ENCODE measurements at regions of chr12 and their contacts with region 1.

Region 1: DNA sequence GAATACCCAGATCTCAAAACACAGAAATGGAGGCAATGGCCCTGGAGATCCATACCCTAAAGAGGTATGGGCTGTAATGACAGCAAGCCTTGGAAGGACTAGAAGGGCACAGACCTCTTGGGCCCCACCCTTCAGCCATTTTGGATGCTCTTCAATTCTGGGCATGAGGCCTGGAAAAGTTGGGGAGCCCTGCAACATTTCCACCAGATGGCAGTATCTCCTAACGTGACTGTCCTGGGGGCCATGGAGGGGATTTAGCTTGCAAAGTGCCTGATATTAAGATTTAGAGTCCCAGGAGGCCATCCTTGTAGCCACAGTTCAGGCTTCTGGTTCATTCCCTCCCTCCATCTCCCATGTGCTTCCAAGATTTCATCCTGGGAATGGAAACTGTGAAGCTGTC is 30.2 kb downstream of the KCNA5 start:
- DNase-seq: peak in 1 of 2 experiments; percentile 59
- H3K4me3 ChIP-seq: no peak overlapping the region
- H3K27ac ChIP-seq: no peak overlapping the region
- H3K4me1 ChIP-seq: peaks cover 0 to 5% (median 4%) of the 10 kb centered on the region in 4 experiments; a peak in 4 of 7 replicates
- H3K27me3 ChIP-seq: 0 out of 7 replicates have a peak, but pooled peaks cover 0 to 4% (median 0%) of the 10 kb centered on the region in 4 experiments
- CTCF ChIP-seq: peak; percentile 53 to 76 (median 73)
- EP300 ChIP-seq: no peak
- POLR2A ChIP-seq: no peak
- RAD21 ChIP-seq: peak; percentile 77 to 83

Region 2: GRCh38 chr12:5022465-5023061 is 51.3 kb before region 1 on chr12:
- CTCF ChIA-PET with region 1: interaction called, 89 read pairs
- POLR2A ChIA-PET with region 1: no interaction called
- DNase-seq: peak; percentile 57 to 69
- H3K4me3 ChIP-seq: no peak overlapping the region
- H3K27ac ChIP-seq: no peak overlapping the region
- H3K4me1 ChIP-seq: peaks cover 0 to 6% (median 2%) of the 10 kb centered on the region in 4 experiments; a peak in 4 of 7 replicates
- H3K27me3 ChIP-seq: no peaks in the 10 kb centered on the region; a peak in 1 of 7 replicates
- CTCF ChIP-seq: peak; percentile 91 to 98 (median 97)
- EP300 ChIP-seq: no peak
- POLR2A ChIP-seq: no peak
- RAD21 ChIP-seq: peak; percentile 96 to 98

Region 3: GRCh38 chr12:5034603-5035002 is 39.2 kb before region 1 on chr12:
- CTCF ChIA-PET with region 1: interaction called, 10 read pairs
- POLR2A ChIA-PET with region 1: no interaction called
- DNase-seq: no peak
- H3K4me3 ChIP-seq: no peak overlapping the region
- H3K27ac ChIP-seq: no peak overlapping the region
- H3K4me1 ChIP-seq: peaks cover 0 to 4% (median 1%) of the 10 kb centered on the region in 4 experiments; a peak in 1 of 7 replicates
- H3K27me3 ChIP-seq: no peaks in the 10 kb centered on the region; a peak in 1 of 7 replicates
- CTCF ChIP-seq: no peak
- EP300 ChIP-seq: no peak
- POLR2A ChIP-seq: no peak
- RAD21 ChIP-seq: no peak

Region 4: GRCh38 chr12:5043589-5044419 is 30.0 kb before region 1 on chr12 and contains the start of gene KCNA5:
- CTCF ChIA-PET with region 1: interaction called, 15 read pairs
- POLR2A ChIA-PET with region 1: no interaction called
- DNase-seq: peak; percentile 13 to 77
- H3K4me3 ChIP-seq: peak within 1 kb of the TSS; percentile 48 to 65 (median 58)
- H3K27ac ChIP-seq: no peak within 1 kb of the TSS
- H3K4me1 ChIP-seq: peaks cover 3 to 9% (median 4%) of the 10 kb centered on the region in 4 experiments
- H3K27me3 ChIP-seq: peaks cover 27 to 57% (median 45%) of the 10 kb centered on the region in 4 experiments
- CTCF ChIP-seq: no peak
- EP300 ChIP-seq: no peak
- POLR2A ChIP-seq: no peak
- RAD21 ChIP-seq: no peak
- total RNA-seq, gene KCNA5: 0.11 and 0.20 TPM in 2 replicates

Region 5: DNA sequence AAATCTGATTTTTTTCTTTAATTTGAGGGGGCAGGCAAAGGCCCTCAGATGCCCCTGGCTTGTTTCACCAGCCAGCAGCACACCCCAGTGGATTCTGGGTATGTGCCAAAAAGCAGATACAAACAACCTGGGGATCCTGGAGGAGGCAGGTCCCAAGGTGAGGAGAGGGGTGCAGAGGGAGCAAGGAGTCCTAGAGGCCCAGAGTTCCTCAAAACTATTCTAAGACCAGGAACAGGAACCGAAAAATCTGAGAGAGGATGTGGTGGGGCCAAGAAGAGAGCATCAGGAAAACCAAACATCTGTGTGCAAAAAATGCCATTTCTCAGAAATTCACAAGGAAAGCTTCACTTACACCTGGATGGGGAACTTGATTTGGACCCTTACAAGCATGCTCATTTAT is 21.9 kb before region 1 on chr12:
- CTCF ChIA-PET with region 1: interaction called, 114 read pairs
- POLR2A ChIA-PET with region 1: no interaction called
- DNase-seq: no peak
- H3K4me3 ChIP-seq: no peak overlapping the region
- H3K27ac ChIP-seq: no peak overlapping the region
- H3K4me1 ChIP-seq: peaks cover 0 to 8% (median 3%) of the 10 kb centered on the region in 4 experiments; a peak in 5 of 7 replicates
- H3K27me3 ChIP-seq: peaks cover 0 to 4% (median under 1%) of the 10 kb centered on the region in 4 experiments; a peak in 4 of 7 replicates
- CTCF ChIP-seq: no peak
- EP300 ChIP-seq: no peak
- POLR2A ChIP-seq: no peak
- RAD21 ChIP-seq: no peak

Region 6: DNA sequence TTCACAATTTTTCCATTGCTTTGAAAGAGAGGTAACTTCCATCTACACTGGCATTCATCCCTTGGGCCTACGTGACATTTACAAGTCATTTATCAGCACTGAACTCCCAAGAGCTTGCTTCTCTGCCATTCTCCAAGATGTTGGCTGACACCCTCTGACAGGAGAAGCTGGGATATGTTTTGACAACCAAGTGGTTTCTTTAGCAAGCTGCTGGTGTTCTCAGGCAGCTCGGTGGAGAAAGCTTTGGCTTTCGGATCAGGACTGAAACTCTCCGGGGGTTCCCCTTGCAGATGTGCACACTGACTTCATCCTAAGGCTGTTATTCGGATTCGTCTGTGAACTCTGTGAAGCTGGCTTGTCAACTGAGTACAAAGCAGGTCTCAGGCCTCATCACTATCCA is 14.5 kb before region 1 on chr12:
- CTCF ChIA-PET with region 1: interaction called, 114 read pairs
- POLR2A ChIA-PET with region 1: interaction called, 5 read pairs
- DNase-seq: no peak
- H3K4me3 ChIP-seq: no peak overlapping the region
- H3K27ac ChIP-seq: no peak overlapping the region
- H3K4me1 ChIP-seq: no peaks in the 10 kb centered on the region
- H3K27me3 ChIP-seq: no peaks in the 10 kb centered on the region; a peak in 1 of 7 replicates
- CTCF ChIP-seq: no peak
- EP300 ChIP-seq: no peak
- POLR2A ChIP-seq: no peak
- RAD21 ChIP-seq: no peak

Region 7: DNA sequence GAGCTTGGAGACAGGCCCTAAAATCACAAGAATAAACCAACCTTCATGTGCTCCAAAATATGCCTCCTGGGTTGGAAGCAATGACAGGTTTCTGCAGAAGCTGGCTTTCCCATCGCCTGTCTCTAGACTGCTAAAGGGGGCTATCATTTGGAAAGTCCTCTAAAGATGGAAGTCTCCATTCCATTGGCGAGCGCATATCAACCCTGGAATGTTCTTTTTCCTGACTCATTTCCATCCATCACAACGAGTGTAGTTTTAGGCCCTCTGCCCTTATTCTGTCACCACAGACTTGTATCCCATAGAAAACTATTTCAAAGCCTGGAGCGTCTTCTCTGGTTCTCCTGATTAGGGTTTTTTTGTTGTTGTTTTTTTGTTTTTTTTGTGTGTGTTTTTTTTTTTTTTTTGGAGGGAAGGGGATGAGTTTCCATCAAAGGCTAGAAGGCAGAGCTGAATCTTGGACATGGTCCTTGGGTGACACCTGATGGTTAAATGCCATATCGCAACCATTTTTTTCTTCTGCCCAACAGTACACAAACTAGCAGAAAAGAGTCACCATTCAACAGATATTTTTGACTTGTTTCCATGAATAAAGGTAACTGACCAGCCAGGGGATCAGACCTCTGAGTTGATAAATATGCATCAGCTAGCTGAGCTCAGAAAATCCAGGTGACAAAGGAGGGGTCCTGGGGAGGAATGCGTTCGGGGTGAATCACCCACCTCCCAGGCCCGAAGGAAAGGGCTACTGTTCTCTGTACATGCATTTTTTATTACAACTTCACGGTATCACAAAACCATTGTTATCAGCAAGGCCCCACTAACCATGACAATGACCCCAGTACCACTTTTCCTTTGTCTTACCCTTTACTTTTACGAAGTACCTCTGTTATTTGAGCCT is 10.3 kb after region 1 on chr12:
- CTCF ChIA-PET with region 1: interaction called, 149 read pairs
- POLR2A ChIA-PET with region 1: interaction called, 3 read pairs
- DNase-seq: peak in 1 of 2 experiments; percentile 65
- H3K4me3 ChIP-seq: no peak overlapping the region
- H3K27ac ChIP-seq: no peak overlapping the region
- H3K4me1 ChIP-seq: peaks cover 0 to 5% (median 0%) of the 10 kb centered on the region in 4 experiments; a peak in 1 of 7 replicates
- H3K27me3 ChIP-seq: no peaks in the 10 kb centered on the region
- CTCF ChIP-seq: peak in 2 of 3 experiments; percentile 66 to 71; a peak in 3 of 4 replicates
- EP300 ChIP-seq: no peak
- POLR2A ChIP-seq: no peak
- RAD21 ChIP-seq: peak; percentile 85 to 88

Region 8: GRCh38 chr12:5102261-5102789 is 28.5 kb after region 1 on chr12:
- CTCF ChIA-PET with region 1: no interaction called
- POLR2A ChIA-PET with region 1: no interaction called
- DNase-seq: no peak
- H3K4me3 ChIP-seq: no peak overlapping the region
- H3K27ac ChIP-seq: no peak overlapping the region
- H3K4me1 ChIP-seq: no peaks in the 10 kb centered on the region
- H3K27me3 ChIP-seq: no peaks in the 10 kb centered on the region; a peak in 2 of 7 replicates
- CTCF ChIP-seq: no peak
- EP300 ChIP-seq: no peak
- POLR2A ChIP-seq: no peak
- RAD21 ChIP-seq: no peak

Region 9: DNA sequence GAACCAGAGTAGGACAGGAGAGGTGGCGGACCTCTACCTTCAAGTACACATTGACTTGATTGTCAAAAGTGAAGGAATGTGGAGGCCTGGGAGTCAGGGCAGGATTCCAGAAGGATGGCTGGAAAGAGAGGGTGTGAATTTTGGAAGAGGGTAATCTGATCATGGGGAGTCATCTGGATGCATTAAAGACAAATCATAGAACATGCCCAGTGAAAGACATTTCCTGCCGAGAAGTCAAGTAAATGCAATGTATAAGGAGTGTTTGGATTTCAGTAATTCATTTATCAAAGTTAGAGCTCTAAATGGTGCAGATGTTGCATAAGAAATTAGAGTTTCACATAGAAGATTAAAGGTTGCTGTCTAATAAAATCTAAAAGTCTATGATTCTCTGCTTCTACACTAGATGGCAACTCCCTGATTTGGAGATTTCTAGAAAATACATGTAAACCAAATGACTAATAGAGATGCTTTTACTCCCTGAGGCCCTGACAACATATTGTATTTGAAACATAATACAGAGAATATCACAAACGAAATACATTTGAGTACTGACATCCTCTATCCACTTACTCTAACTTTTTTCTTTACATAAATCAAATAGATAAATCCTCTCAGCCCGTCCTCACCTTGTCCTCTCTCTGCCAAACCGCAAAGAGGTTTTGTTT is 61.1 kb after region 1 on chr12:
- CTCF ChIA-PET with region 1: no interaction called
- POLR2A ChIA-PET with region 1: no interaction called
- DNase-seq: no peak
- H3K4me3 ChIP-seq: no peak overlapping the region
- H3K27ac ChIP-seq: no peak overlapping the region
- H3K4me1 ChIP-seq: peaks cover 0 to 5% (median 2%) of the 10 kb centered on the region in 4 experiments; a peak in 2 of 7 replicates
- H3K27me3 ChIP-seq: no peaks in the 10 kb centered on the region
- CTCF ChIP-seq: no peak
- EP300 ChIP-seq: no peak
- POLR2A ChIP-seq: no peak
- RAD21 ChIP-seq: no peak

Measured in H1 (cell line).